PC-9 (cell line): ENCODE measurements at regions of chr12 and their contacts with region 1.

Region 1: DNA sequence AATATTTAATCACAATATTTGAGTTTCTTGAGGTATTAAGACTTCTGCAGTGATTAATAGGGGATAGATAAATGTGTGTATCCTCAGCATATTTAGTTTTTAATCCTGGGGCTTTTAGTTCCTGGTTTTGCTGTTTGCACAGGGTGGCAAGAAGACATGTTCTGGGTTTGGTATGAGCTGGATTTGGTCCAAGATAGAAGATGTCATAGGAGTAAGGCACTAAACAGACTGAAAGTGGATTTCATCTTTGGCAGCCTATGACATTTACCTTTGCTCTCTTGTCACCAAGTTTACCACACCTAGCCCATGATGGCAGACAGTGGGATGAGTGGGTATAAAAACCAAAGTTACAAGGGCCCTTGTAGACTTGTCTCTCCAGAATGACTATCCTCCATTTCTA is 168.2 kb downstream of the LRRK2 start:
- DNase-seq: no peak
- H3K4me3 ChIP-seq: no peak overlapping the region
- H3K27ac ChIP-seq: no peak overlapping the region
- H3K4me1 ChIP-seq: peaks cover 26% of the 10 kb centered on the region
- H3K27me3 ChIP-seq: no peaks in the 10 kb centered on the region
- CTCF ChIP-seq: no peak

Region 2: GRCh38 chr12:40099423-40099853 is 293.6 kb before region 1 on chr12:
- CTCF ChIA-PET with region 1: no interaction called
- POLR2A ChIA-PET with region 1: interaction called, 11 read pairs
- intact Hi-C with region 1: no loop called
- DNase-seq: no peak
- H3K4me3 ChIP-seq: no peak overlapping the region
- H3K27ac ChIP-seq: no peak overlapping the region
- H3K4me1 ChIP-seq: peaks cover 3% of the 10 kb centered on the region; the same call in 1 of the 2 replicates
- H3K27me3 ChIP-seq: no peaks in the 10 kb centered on the region
- CTCF ChIP-seq: no peak